Panc1 (cell line): ENCODE measurements at regions of chr14 and their contacts with region 1.

Region 1: DNA sequence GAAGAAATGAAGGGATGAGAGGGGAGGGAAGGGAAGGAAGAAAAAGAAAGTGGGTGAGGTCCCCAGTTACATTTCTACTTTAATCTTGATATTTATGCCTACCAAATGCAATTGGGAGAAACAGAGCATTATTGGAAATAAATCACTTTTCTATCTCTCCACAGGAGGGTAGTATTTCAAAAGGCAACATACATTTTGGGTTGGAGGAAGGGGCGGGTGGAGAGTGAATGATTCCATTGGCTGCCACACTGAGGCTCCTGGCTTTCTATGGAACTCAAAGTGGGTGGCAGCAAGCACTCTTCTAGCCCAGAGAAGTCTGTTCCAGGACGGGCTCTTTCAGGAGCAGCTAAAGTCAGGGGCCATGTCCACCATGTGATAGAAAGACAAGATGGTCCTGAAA is 441.3 kb downstream of the DAD1 start:
- DNase-seq: no peak
- ATAC-seq: no peak
- H3K4me3 ChIP-seq: no peak overlapping the region
- H3K27ac ChIP-seq: no peak overlapping the region
- H3K4me1 ChIP-seq: no peaks in the 10 kb centered on the region
- H3K27me3 ChIP-seq: no peaks in the 10 kb centered on the region; the same call in 1 of the 2 replicates
- CTCF ChIP-seq: no peak

Region 2: DNA sequence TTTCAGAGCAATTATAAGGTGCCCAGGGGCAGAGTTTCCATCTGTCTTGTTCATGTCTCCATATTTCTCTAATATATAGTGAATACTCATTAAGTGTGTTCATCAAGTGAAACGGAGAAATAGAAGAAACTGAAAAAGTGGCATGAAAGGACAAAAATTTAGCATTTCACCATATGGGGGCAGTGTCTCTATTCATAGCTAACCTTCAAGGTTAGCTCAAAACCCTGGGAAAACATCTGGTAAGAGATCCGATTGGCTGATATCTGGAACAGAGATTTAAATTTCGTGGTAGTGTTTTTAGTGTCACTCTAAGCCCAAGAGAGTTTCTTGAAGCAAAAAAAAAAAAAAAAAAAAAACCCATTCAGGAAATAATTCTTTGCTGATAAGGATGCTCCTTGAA is 73.8 kb after region 1 on chr14:
- CTCF ChIA-PET with region 1: interaction called, 15 read pairs
- POLR2A ChIA-PET with region 1: no interaction called
- in situ Hi-C with region 1: no loop called
- intact Hi-C with region 1: no loop called
- DNase-seq: no peak
- ATAC-seq: no peak
- H3K4me3 ChIP-seq: no peak overlapping the region
- H3K27ac ChIP-seq: no peak overlapping the region
- H3K4me1 ChIP-seq: no peaks in the 10 kb centered on the region
- H3K27me3 ChIP-seq: no peaks in the 10 kb centered on the region
- CTCF ChIP-seq: peak; percentile 16; the same call in 1 of the 2 replicates

Region 3: GRCh38 chr14:23320774-23321571 is 1173.3 kb after region 1 on chr14 and contains the start of gene PABPN1:
- CTCF ChIA-PET with region 1: no interaction called
- POLR2A ChIA-PET with region 1: no interaction called
- in situ Hi-C with region 1: no loop called
- intact Hi-C with region 1: no loop called
- DNase-seq: peak; percentile 97
- ATAC-seq: peak; percentile 95
- H3K4me3 ChIP-seq: peak within 1 kb of the TSS; percentile 93 to 97
- H3K27ac ChIP-seq: peak within 1 kb of the TSS; percentile 95
- H3K4me1 ChIP-seq: peaks cover 7% of the 10 kb centered on the region
- H3K27me3 ChIP-seq: no peaks in the 10 kb centered on the region
- CTCF ChIP-seq: no peak
- total RNA-seq, gene PABPN1: 159 TPM